PC-9 (cell line): ENCODE measurements at regions of chr6 and their contacts with region 1.

Region 1: DNA sequence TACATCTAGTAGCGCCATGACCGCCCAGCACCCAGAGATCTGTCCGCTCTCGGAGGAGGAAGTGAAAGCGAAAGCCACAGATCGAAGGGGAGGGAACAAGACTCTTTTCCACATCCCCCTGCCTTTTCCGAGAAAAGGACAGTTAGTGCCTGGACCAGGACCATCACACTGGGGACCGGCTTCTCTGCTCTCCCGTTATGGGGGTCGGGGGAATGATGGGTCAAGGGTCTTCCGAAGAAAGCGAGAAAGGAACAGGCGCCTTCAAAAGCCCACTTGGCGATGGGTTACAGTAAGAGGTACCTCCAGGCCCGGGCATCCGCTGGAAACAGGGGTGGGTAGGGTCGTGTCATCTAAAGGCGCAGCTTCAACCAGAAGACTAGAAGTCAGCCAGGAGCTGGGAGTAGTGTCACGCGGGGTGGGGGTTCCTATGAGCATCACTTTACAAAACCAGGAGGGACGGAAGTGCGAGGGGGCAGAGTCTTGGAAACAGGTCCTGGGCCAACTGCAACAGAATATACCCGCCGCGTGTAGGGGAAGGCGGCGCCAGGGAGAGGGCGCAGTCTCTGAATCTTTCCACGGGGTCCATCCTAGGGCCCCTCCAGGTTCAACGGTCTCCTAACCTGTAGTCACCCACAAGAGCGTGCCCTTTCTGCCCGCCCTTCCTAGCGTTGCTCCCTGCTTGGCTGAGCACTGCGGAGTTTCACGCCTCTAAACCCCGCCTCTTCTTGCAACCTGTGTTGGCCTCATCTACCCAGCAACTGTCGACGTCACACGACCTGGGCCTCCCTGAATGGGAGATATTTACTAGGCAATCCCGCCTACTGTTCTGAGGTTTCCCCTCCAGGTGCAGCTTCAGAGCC is at the start of gene PSMB8:
- DNase-seq: peak; percentile 94
- H3K4me3 ChIP-seq: peak within 1 kb of the TSS; percentile 91
- H3K27ac ChIP-seq: no peak within 1 kb of the TSS
- H3K4me1 ChIP-seq: peaks cover 6% of the 10 kb centered on the region; the same call in 1 of the 2 replicates
- H3K27me3 ChIP-seq: no peaks in the 10 kb centered on the region
- CTCF ChIP-seq: no peak
- total RNA-seq, gene PSMB8: 70.8 and 101 TPM in 2 replicates

Region 2: DNA sequence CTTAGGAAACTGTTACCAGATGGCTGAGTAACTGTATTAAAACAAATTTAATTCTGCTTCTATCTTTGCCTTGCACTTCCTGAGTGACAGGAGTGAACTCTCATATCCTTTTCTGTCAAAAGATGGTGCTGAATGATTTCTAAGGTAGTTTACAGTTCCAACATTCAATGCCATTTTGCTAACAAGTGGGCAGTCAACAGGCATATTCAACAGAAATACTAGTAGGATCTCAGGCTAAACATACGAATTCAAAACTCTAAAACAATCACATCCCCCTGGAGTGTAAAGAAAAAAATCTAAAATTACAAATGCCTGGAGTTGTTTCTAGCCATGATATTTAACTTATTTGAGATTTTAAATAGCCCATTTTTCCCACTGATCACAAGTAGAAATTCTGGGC is 16.5 kb after region 1 on chr6:
- CTCF ChIA-PET with region 1: interaction called, 5 read pairs
- POLR2A ChIA-PET with region 1: interaction called, 3 read pairs
- intact Hi-C with region 1: loop called (anchors 1 kb)
- DNase-seq: no peak
- H3K4me3 ChIP-seq: no peak overlapping the region
- H3K27ac ChIP-seq: peak overlapping the region; percentile 40; the same call in 1 of the 2 replicates
- H3K4me1 ChIP-seq: peaks cover 20% of the 10 kb centered on the region
- H3K27me3 ChIP-seq: no peaks in the 10 kb centered on the region
- CTCF ChIP-seq: no peak

Region 3: DNA sequence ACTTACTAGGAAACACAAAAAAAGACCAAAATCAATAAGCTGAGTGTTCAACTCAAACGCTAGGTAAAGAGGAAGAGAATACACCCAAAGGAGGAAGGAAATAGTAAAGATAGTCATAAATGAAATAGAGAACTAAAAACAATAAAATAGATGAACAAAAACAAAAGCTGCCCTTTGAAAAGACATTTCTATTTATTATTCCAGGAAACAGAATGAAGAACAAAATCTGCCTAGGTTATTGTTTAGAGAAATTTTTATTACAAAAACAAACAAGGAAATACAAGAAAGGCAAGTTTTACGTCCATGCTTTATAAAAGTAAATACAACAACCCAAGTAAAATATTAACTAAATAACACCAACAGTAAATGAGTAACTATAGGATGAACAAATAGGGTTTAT is 76.5 kb after region 1 on chr6:
- CTCF ChIA-PET with region 1: no interaction called
- POLR2A ChIA-PET with region 1: no interaction called
- intact Hi-C with region 1: no loop called
- DNase-seq: no peak
- H3K4me3 ChIP-seq: no peak overlapping the region
- H3K27ac ChIP-seq: no peak overlapping the region
- H3K4me1 ChIP-seq: no peaks in the 10 kb centered on the region
- H3K27me3 ChIP-seq: no peaks in the 10 kb centered on the region
- CTCF ChIP-seq: no peak

Region 4: GRCh38 chr6:33156561-33156960 is 312.4 kb after region 1 on chr6:
- CTCF ChIA-PET with region 1: no interaction called
- POLR2A ChIA-PET with region 1: no interaction called
- intact Hi-C with region 1: no loop called
- DNase-seq: no peak
- H3K4me3 ChIP-seq: no peak overlapping the region
- H3K27ac ChIP-seq: no peak overlapping the region
- H3K4me1 ChIP-seq: 0 out of 2 replicates have a peak, but pooled peaks cover under 1% of the 10 kb centered on the region
- H3K27me3 ChIP-seq: peaks cover 55% of the 10 kb centered on the region
- CTCF ChIP-seq: no peak